T-cell (primary cell): ENCODE measurements at regions of chr1 and their contacts with region 1.

Region 1: GRCh38 chr1:85180869-85181268 is 19.9 kb downstream of the SYDE2 start:
- DNase-seq: peak in 1 of 35 experiments; percentile 2
- ATAC-seq: no peak
- H3K4me3 ChIP-seq: no peak overlapping the region
- H3K4me3 Mint-ChIP-seq: no peak overlapping the region
- H3K27ac ChIP-seq: no peak overlapping the region
- H3K27ac Mint-ChIP-seq: no peak overlapping the region
- H3K4me1 ChIP-seq: peaks cover 0 to 3% of the 10 kb centered on the region in 2 experiments
- H3K4me1 Mint-ChIP-seq: peaks cover 17 to 18% (median 17%) of the 10 kb centered on the region in 3 donors
- H3K27me3 ChIP-seq: no peaks in the 10 kb centered on the region
- H3K27me3 Mint-ChIP-seq: no peaks in the 10 kb centered on the region

Region 2: DNA sequence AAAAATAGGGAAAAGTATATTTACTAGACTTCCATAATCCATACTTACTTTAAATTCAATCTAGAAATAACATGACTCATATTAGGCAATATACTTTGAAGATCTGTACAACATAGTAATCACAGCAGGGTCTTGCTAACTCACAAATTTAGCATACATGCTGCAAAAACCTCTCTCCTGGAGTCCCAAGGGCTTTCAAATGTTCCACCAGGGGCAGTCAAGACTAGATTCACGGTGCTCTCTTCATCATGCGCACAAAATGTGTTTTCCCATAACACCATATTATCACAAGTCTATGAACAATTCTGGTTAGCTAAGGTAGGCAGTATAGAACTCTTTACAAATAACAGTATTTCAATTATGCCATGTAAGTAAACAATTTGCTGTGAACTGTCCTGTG is 536.4 kb before region 1 on chr1:
- CTCF ChIA-PET with region 1: no interaction called
- POLR2A ChIA-PET with region 1: no interaction called
- DNase-seq: peak in 1 of 35 experiments; percentile 6
- ATAC-seq: no peak
- H3K4me3 ChIP-seq: no peak overlapping the region
- H3K4me3 Mint-ChIP-seq: no peak overlapping the region
- H3K27ac ChIP-seq: no peak overlapping the region
- H3K27ac Mint-ChIP-seq: no peak overlapping the region
- H3K4me1 ChIP-seq: no peaks in the 10 kb centered on the region
- H3K4me1 Mint-ChIP-seq: no peaks in the 10 kb centered on the region
- H3K27me3 ChIP-seq: no peaks in the 10 kb centered on the region
- H3K27me3 Mint-ChIP-seq: no peaks in the 10 kb centered on the region

Region 3: DNA sequence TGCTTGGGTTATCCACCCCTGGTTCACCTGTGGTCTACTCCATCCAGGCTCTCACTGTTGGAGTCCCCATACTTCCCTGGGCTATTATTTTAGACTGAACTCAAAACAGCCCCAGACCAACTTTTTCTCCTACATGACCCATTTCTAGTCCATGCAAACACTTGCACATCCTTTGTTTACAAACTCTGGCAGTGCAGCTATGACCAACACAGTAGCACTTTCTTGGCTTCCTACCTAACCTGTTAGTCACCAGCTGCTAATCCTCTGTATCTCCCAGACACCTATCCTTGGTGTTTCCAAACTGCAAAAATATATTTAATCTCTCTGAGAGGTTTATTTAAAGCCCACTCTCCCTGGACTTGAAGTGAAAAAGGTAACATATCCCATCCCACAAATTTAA is 193.3 kb after region 1 on chr1:
- CTCF ChIA-PET with region 1: no interaction called
- POLR2A ChIA-PET with region 1: no interaction called
- DNase-seq: no peak
- ATAC-seq: no peak
- H3K4me3 ChIP-seq: no peak overlapping the region
- H3K4me3 Mint-ChIP-seq: no peak overlapping the region
- H3K27ac ChIP-seq: no peak overlapping the region
- H3K27ac Mint-ChIP-seq: no peak overlapping the region
- H3K4me1 ChIP-seq: no peaks in the 10 kb centered on the region
- H3K4me1 Mint-ChIP-seq: no peaks in the 10 kb centered on the region
- H3K27me3 ChIP-seq: no peaks in the 10 kb centered on the region
- H3K27me3 Mint-ChIP-seq: peaks cover 11 to 18% of the 10 kb centered on the region in 2 donors

Region 4: DNA sequence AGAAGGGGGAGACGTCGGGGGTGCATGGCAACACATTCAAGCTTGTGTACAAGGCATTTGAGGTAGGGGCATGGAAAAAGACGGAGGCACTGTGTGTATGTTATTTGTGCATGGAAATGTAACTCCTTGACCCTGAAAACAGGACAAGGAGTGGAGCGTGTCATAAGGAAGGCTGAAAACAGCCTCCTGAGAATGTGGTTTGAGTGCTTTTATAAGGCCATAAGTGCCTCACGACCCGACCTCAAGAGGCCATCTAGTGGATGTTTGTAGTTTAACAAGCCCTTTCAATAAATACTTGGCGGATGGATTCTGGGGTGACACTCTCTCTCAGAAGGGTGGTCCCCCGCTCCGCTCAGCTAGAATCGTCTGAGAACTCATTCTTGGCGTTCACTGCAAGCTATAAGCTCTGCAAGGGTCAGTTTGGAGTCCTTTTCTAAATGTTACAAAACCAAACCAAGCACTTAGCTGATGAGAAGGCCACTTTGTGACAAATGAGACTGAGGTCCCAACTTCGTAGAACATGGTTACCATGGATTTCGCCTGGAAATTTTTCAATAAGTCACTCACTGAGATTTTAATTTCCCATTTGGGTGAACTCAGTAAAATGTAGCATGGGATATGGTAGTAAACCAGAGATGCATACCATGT is 1327.2 kb after region 1 on chr1:
- CTCF ChIA-PET with region 1: interaction called in 1 of 2 experiments, 12 read pairs
- POLR2A ChIA-PET with region 1: no interaction called
- DNase-seq: peak in 8 of 35 experiments; percentile 3 to 37 (median 8)
- ATAC-seq: peak in 2 of 4 experiments; percentile 56 to 61
- H3K4me3 ChIP-seq: no peak overlapping the region
- H3K4me3 Mint-ChIP-seq: no peak overlapping the region
- H3K27ac ChIP-seq: no peak overlapping the region
- H3K27ac Mint-ChIP-seq: no peak overlapping the region
- H3K4me1 ChIP-seq: peaks cover 0 to 6% of the 10 kb centered on the region in 2 experiments
- H3K4me1 Mint-ChIP-seq: peaks cover 0 to 6% (median 1%) of the 10 kb centered on the region in 3 donors
- H3K27me3 ChIP-seq: peaks cover 0 to 7% of the 10 kb centered on the region in 2 experiments
- H3K27me3 Mint-ChIP-seq: peaks cover 3 to 8% of the 10 kb centered on the region in 2 donors